ENCODE measurements at regions of chr7 and their contacts with region 1.

Region 1: GRCh38 chr7:116236020-116236630 is 25.8 kb downstream of the TES start:
- DNase-seq: peak; percentile 74
- H3K4me3 ChIP-seq: no peak overlapping the region
- H3K27ac ChIP-seq: no peak overlapping the region
- H3K4me1 ChIP-seq: peaks cover 11% of the 10 kb centered on the region
- H3K27me3 ChIP-seq: no peaks in the 10 kb centered on the region
- CTCF ChIP-seq: peak; percentile 22 to 24
- POLR2A ChIP-seq: no peak

Region 2: GRCh38 chr7:116024826-116025809 is 211.0 kb before region 1 on chr7:
- CTCF ChIA-PET with region 1: no interaction called
- POLR2A ChIA-PET with region 1: no interaction called
- dilution Hi-C with region 1: no loop called
- intact Hi-C with region 1: no loop called
- DNase-seq: peak; percentile 66
- H3K4me3 ChIP-seq: no peak overlapping the region
- H3K27ac ChIP-seq: peak overlapping the region; percentile 58
- H3K4me1 ChIP-seq: peaks cover 12% of the 10 kb centered on the region
- H3K27me3 ChIP-seq: no peaks in the 10 kb centered on the region
- CTCF ChIP-seq: no peak
- POLR2A ChIP-seq: no peak

Region 3: DNA sequence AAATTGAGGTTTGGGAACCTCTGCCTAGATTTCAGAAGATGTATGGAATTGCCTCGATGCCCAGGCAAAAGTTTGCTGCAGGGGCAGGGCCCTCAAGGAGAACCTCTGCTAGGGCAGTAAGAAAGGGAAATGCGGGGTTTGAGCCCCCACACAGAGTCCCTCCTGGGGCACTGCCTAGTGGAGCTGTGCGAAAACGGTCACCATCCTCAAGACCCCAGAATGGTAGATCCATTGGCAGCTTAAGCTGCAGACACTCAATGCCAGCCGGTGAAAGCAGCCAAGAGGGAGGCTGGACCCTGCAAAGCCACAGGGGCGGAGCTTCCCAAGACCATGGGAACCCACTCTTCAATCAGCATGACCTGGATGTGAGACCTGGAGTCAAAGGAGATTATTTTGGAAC is 190.6 kb before region 1 on chr7:
- CTCF ChIA-PET with region 1: no interaction called
- POLR2A ChIA-PET with region 1: no interaction called
- dilution Hi-C with region 1: no loop called
- intact Hi-C with region 1: no loop called
- DNase-seq: no peak
- H3K4me3 ChIP-seq: no peak overlapping the region
- H3K27ac ChIP-seq: no peak overlapping the region
- H3K4me1 ChIP-seq: no peaks in the 10 kb centered on the region
- H3K27me3 ChIP-seq: no peaks in the 10 kb centered on the region
- CTCF ChIP-seq: no peak
- POLR2A ChIP-seq: no peak

Region 4: GRCh38 chr7:116173051-116174028 is 62.8 kb before region 1 on chr7:
- CTCF ChIA-PET with region 1: interaction called, 462 read pairs
- POLR2A ChIA-PET with region 1: no interaction called
- dilution Hi-C with region 1: no loop called
- intact Hi-C with region 1: loop called (anchors 2 kb)
- DNase-seq: peak; percentile 84
- H3K4me3 ChIP-seq: no peak overlapping the region
- H3K27ac ChIP-seq: no peak overlapping the region
- H3K4me1 ChIP-seq: no peaks in the 10 kb centered on the region
- H3K27me3 ChIP-seq: peaks cover 0 to 3% of the 10 kb centered on the region in 2 experiments
- CTCF ChIP-seq: peak in 1 of 2 donors; percentile 20
- POLR2A ChIP-seq: no peak

Region 5: DNA sequence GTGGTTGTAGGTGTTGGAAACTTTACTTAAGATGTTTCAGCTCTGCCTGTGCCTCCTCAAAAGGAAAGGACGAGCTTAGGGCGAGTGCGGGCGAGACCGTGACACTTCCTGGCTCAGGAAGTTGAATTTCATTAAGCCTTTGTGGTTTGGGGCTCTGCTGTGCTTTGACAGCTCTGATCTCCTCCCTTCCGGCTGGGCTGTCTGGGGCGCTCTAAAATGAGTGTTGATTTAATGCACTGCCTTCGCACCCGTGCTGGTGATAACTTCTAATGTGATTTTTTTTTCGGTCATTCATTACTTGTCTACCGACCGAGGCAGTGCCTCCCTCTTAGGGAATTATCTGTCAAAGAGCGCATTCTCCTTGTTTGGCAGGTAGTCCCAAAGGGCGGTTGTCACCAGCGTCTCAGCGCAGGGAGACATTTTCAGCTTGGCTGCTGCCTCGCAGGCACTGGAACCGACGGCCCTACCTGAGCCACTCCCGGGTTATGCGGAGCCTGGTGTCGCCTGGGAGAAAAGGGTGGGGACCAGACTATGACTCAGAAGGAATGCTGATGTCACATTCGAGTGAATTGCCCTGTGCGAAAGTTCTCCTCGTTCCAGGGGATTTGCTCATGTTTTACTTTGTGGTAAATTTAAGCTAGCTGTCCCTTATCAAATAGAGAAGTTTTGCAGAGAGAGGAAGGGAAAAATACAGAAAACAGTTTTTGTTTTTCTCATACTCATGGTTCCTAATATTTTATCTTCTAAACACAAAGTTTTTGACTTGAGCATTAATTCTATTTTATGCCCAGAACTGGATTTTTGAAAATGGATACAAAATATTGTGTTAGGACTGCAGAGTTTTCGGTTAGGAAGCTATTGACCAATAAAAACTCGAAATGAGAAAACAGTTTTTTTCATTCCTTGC is 24.9 kb before region 1 on chr7:
- CTCF ChIA-PET with region 1: interaction called, 22 read pairs
- POLR2A ChIA-PET with region 1: no interaction called
- dilution Hi-C with region 1: no loop called
- intact Hi-C with region 1: no loop called
- DNase-seq: peak; percentile 86
- H3K4me3 ChIP-seq: peak overlapping the region; percentile 79 to 89 (median 84)
- H3K27ac ChIP-seq: peak overlapping the region; percentile 89
- H3K4me1 ChIP-seq: peaks cover 39% of the 10 kb centered on the region
- H3K27me3 ChIP-seq: no peaks in the 10 kb centered on the region
- CTCF ChIP-seq: no peak
- POLR2A ChIP-seq: peak; percentile 52

Region 6: DNA sequence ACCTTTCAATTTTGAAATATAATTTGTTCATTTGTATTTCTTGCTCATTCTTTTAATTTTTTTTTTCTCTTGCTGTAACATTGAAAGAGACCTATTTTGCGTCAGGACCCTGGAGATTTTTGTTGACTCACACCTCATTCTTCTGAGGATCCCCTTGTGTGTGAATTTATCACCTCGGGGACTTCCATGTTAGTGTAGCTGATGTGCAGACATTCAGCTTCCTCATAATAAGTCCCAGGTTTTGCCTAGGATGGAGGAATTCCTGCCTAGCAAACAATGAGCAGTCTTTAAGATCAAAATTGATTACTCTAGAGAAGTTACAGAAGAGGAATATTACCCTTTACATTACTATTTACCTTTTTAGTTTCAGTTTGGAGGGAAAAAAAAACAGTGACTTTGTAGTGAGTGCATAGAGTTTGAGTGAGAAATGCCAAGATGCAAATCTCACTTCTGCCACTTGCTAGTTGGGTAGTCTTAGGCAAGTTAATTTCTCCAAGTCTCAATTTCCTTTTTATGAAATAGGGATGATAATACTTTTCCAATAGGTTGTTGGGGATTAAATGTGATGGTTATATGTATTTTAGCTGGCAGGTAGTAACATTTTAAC is 11.5 kb before region 1 on chr7:
- CTCF ChIA-PET with region 1: interaction called, 22 read pairs
- POLR2A ChIA-PET with region 1: no interaction called
- dilution Hi-C with region 1: no loop called
- intact Hi-C with region 1: no loop called
- DNase-seq: no peak
- H3K4me3 ChIP-seq: no peak overlapping the region
- H3K27ac ChIP-seq: no peak overlapping the region
- H3K4me1 ChIP-seq: peaks cover 4% of the 10 kb centered on the region
- H3K27me3 ChIP-seq: no peaks in the 10 kb centered on the region
- CTCF ChIP-seq: no peak
- POLR2A ChIP-seq: no peak

Region 7: DNA sequence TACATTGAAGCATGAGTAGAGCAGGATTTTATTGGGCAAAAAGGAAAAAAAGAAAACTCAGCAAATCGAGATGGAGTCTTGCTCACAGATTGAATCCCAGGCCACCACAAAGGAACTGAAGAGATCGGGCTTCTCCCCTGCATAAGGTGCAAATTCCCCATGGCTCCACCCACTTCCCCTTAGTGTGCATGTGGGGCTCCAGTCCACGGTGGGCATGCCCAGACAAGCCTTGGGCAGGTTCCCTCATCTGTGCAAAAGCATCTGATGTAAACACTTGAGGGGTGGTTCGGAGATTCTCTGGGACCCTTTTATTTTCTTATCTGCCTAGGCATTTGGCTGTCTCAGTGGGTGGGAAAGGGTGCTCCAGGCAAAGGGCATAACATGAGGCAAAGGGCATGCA is 1394.4 kb after region 1 on chr7:
- CTCF ChIA-PET with region 1: no interaction called
- POLR2A ChIA-PET with region 1: no interaction called
- dilution Hi-C with region 1: no loop called
- intact Hi-C with region 1: no loop called
- DNase-seq: no peak
- H3K4me3 ChIP-seq: no peak overlapping the region
- H3K27ac ChIP-seq: no peak overlapping the region
- H3K4me1 ChIP-seq: no peaks in the 10 kb centered on the region
- H3K27me3 ChIP-seq: no peaks in the 10 kb centered on the region
- CTCF ChIP-seq: no peak
- POLR2A ChIP-seq: no peak

Measured in endothelial cell of umbilical vein (primary cell).